HepG2 (cell line): ENCODE measurements at regions of chrX and their contacts with region 1.

Region 1: GRCh38 chrX:107654872-107655761 is 26.8 kb downstream of the PRPS1 start:
- DNase-seq: peak; percentile 33
- ATAC-seq: peak; percentile 91
- H3K4me3 ChIP-seq: no peak overlapping the region
- H3K27ac ChIP-seq: no peak overlapping the region
- H3K4me1 ChIP-seq: no peaks in the 10 kb centered on the region
- H3K27me3 ChIP-seq: no peaks in the 10 kb centered on the region; a peak in 1 of 5 replicates
- CTCF ChIP-seq: peak; percentile 79
- EP300 ChIP-seq: no peak
- POLR2A ChIP-seq: no peak
- RAD21 ChIP-seq: no peak

Region 2: DNA sequence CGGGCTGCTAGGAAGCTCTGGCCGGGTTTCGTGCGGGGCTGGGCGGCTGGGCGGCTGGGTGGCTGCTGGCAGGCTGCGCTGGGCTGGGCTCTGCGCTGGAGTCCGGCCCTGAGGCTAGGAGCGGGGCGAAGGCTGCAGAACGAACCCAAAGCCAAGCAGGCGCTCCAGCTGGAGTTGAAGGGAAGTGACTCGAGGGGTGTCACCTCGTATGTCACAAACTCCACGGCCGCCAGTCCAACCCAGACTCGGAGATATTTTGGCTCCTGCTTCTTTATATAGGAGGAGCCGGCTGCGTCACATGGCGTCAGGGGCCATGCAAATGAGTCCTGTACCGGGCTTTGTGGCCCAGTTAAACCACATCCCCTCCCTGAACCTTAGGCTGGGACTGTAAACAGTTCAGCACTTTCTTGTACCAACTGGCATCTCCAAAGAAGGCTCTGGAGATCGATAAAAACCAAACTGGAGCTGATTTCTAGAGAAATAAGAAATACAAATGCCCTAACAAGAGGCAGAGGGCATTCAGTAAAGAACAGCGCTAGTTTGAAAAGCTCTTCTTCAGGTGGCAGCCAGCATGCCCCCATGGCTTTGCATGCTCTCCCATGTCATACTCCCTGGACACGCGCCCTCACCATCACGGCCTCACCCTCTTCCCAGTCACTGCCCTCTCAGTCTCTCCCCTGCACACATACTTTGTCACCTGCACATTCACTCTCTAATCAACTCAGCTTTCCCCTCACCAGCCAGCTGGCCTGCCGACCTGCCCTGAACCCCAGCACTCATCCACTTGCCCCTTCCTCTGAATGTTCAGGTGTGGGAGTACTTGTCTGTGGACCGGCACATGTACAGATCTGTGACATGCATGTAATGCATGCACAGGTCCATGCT is 61.9 kb after region 1 on chrX:
- CTCF ChIA-PET with region 1: no interaction called
- POLR2A ChIA-PET with region 1: no interaction called
- in situ Hi-C with region 1: no loop called
- intact Hi-C with region 1: no loop called
- DNase-seq: no peak
- ATAC-seq: peak; percentile 59
- H3K4me3 ChIP-seq: peak overlapping the region; percentile 45 to 62 (median 47); a peak in 4 of 6 replicates
- H3K27ac ChIP-seq: no peak overlapping the region
- H3K4me1 ChIP-seq: peaks cover 14% of the 10 kb centered on the region
- H3K27me3 ChIP-seq: peaks cover 0 to 12% of the 10 kb centered on the region in 2 experiments; a peak in 1 of 5 replicates
- CTCF ChIP-seq: no peak
- EP300 ChIP-seq: no peak
- POLR2A ChIP-seq: peak in 1 of 2 experiments; percentile 44; a peak in 1 of 4 replicates
- RAD21 ChIP-seq: no peak

Region 3: GRCh38 chrX:107776649-107777535 is 121.8 kb after region 1 on chrX:
- CTCF ChIA-PET with region 1: interaction called, 8 read pairs
- POLR2A ChIA-PET with region 1: no interaction called
- in situ Hi-C with region 1: loop called (anchors 5 kb)
- intact Hi-C with region 1: loop called (anchors 1 kb)
- DNase-seq: peak; percentile 50
- ATAC-seq: peak; percentile 75
- H3K4me3 ChIP-seq: no peak overlapping the region
- H3K27ac ChIP-seq: no peak overlapping the region
- H3K4me1 ChIP-seq: 0 out of 2 replicates have a peak, but pooled peaks cover 6% of the 10 kb centered on the region
- H3K27me3 ChIP-seq: peaks cover 6 to 29% of the 10 kb centered on the region in 2 experiments
- CTCF ChIP-seq: peak; percentile 71
- EP300 ChIP-seq: no peak
- POLR2A ChIP-seq: no peak
- RAD21 ChIP-seq: no peak

Region 4: GRCh38 chrX:107804427-107804826 is 149.3 kb after region 1 on chrX:
- CTCF ChIA-PET with region 1: no interaction called
- POLR2A ChIA-PET with region 1: no interaction called
- in situ Hi-C with region 1: no loop called
- intact Hi-C with region 1: no loop called
- DNase-seq: no peak
- ATAC-seq: no peak
- H3K4me3 ChIP-seq: no peak overlapping the region
- H3K27ac ChIP-seq: no peak overlapping the region
- H3K4me1 ChIP-seq: no peaks in the 10 kb centered on the region
- H3K27me3 ChIP-seq: no peaks in the 10 kb centered on the region
- CTCF ChIP-seq: no peak
- EP300 ChIP-seq: no peak
- POLR2A ChIP-seq: no peak
- RAD21 ChIP-seq: no peak

Region 5: GRCh38 chrX:107894038-107894437 is 238.9 kb after region 1 on chrX:
- CTCF ChIA-PET with region 1: no interaction called
- POLR2A ChIA-PET with region 1: no interaction called
- in situ Hi-C with region 1: no loop called
- intact Hi-C with region 1: loop called (anchors 5 kb)
- DNase-seq: peak; percentile 47
- ATAC-seq: peak; percentile 56; the same call in 2 of the 3 replicates
- H3K4me3 ChIP-seq: no peak overlapping the region
- H3K27ac ChIP-seq: no peak overlapping the region
- H3K4me1 ChIP-seq: no peaks in the 10 kb centered on the region
- H3K27me3 ChIP-seq: no peaks in the 10 kb centered on the region
- CTCF ChIP-seq: peak; percentile 53
- EP300 ChIP-seq: no peak
- POLR2A ChIP-seq: no peak
- RAD21 ChIP-seq: peak; percentile 27; the same call in 1 of the 2 replicates